WTC11 (cell line): ENCODE measurements at regions of chr17 and their contacts with region 1.

Region 1: GRCh38 chr17:40345161-40345993 is 19.2 kb downstream of the GJD3 start:
- DNase-seq: peak; percentile 85
- ATAC-seq: peak; percentile 36
- H3K4me3 Mint-ChIP-seq: peak overlapping the region; percentile 76
- H3K27ac Mint-ChIP-seq: no peak overlapping the region
- H3K4me1 Mint-ChIP-seq: peaks cover 69% of the 10 kb centered on the region
- H3K27me3 Mint-ChIP-seq: peaks cover 59% of the 10 kb centered on the region
- CTCF ChIP-seq: no peak

Region 2: GRCh38 chr17:40113110-40113906 is 232.1 kb before region 1 on chr17:
- CTCF ChIA-PET with region 1: no interaction called
- POLR2A ChIA-PET with region 1: no interaction called
- DNase-seq: peak; percentile 92
- ATAC-seq: peak; percentile 35
- H3K4me3 Mint-ChIP-seq: peak overlapping the region; percentile 58
- H3K27ac Mint-ChIP-seq: peak overlapping the region; percentile 98
- H3K4me1 Mint-ChIP-seq: peaks cover 72% of the 10 kb centered on the region
- H3K27me3 Mint-ChIP-seq: peaks cover 3% of the 10 kb centered on the region
- CTCF ChIP-seq: peak; percentile 66

Region 3: DNA sequence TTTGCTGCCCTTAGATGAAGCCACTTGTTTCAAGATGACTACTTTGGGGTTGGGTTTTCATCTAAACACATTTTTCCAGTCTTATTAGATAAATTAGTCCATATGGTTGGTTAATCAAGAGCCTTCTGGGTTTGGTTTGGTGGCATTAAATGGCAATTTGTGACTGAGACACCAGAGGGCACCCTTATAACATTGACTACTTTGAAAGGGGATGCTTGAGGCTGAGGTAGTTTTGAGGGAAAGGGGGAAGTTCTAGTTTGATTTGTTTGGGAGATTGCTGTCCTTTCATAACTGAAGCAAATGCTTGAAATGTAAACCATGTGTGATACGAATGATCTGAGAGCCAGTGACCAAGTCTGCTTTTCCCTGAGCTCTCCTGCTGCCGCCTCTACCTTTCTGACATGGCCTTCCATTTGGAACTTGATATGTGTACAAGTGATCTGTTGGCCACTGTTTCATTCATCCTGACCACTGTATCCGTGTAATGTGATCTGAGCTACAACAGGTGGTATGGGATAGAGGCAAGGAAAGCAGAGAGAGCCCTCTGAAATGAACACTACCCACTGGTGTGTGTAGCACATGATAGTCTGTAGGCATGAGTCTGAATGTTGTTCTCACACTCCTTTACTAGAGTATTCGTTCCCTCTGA is 42.2 kb before region 1 on chr17:
- CTCF ChIA-PET with region 1: interaction called, 259 read pairs
- POLR2A ChIA-PET with region 1: interaction called, 10 read pairs
- DNase-seq: peak; percentile 48
- ATAC-seq: no peak
- H3K4me3 Mint-ChIP-seq: no peak overlapping the region
- H3K27ac Mint-ChIP-seq: no peak overlapping the region
- H3K4me1 Mint-ChIP-seq: peaks cover 10% of the 10 kb centered on the region
- H3K27me3 Mint-ChIP-seq: no peaks in the 10 kb centered on the region
- CTCF ChIP-seq: peak; percentile 23

Region 4: DNA sequence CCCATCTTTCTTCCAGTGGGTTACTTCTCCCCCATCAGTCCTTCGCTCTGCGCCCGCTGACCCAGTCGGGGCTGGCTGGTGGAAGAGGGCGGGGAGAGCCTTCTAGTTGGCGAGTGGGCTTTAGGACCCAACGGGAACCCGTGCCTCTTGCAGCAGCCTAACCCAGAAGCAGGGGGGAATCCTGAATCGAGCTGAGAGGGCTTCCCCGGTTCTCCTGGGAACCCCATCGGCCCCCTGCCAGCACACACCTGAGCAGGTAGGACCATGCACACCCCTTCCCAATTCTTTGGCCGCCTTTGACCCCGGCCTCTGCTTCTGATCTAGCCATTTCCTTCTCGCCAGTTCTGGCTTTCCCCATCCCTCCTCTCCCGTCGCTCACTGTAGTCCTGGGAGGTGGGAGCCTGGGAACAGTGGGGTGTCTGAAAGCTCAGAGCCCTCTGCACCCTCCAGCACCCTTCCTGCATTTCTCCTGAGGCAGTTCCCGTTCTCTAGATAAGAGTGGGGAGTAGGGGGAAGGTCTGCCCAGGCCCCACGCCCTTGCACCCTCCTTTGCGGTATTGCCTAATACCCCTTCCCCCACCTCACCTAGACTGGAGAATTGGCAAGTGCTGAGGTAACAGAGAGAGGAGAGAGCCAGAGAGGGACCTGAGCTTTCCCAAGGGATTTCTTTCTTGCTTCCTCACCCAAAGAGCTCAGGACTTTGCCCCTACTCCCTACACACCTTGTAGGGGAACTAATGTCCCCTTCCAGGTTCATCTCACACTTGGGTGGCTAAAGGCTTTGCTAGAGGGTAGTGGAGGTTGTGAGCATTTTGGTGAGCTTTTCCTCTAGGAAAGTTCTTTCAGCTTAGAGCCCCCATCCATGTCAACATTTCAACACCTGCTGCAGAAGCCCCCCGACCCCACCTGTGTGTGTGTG is 36.1 kb before region 1 on chr17 and contains the start of gene RARA:
- CTCF ChIA-PET with region 1: interaction called, 259 read pairs
- POLR2A ChIA-PET with region 1: interaction called, 10 read pairs
- DNase-seq: peak; percentile 83
- ATAC-seq: peak; percentile 77
- H3K4me3 Mint-ChIP-seq: no peak within 1 kb of the TSS
- H3K27ac Mint-ChIP-seq: no peak within 1 kb of the TSS
- H3K4me1 Mint-ChIP-seq: peaks cover 40% of the 10 kb centered on the region
- H3K27me3 Mint-ChIP-seq: no peaks in the 10 kb centered on the region
- CTCF ChIP-seq: no peak
- total RNA-seq, gene RARA: 14.3 to 20.7 TPM (median 15.8 TPM) in 3 replicates

Region 5: GRCh38 chr17:40325156-40326013 is 20.0 kb before region 1 on chr17:
- CTCF ChIA-PET with region 1: no interaction called
- POLR2A ChIA-PET with region 1: no interaction called
- DNase-seq: no peak
- ATAC-seq: no peak
- H3K4me3 Mint-ChIP-seq: no peak overlapping the region
- H3K27ac Mint-ChIP-seq: no peak overlapping the region
- H3K4me1 Mint-ChIP-seq: peaks cover 36% of the 10 kb centered on the region
- H3K27me3 Mint-ChIP-seq: no peaks in the 10 kb centered on the region
- CTCF ChIP-seq: no peak